Naive thymus-derived CD4-positive, alpha-beta T cell (primary cell): ENCODE measurements at regions of chr1 and their contacts with region 1.

Region 1: DNA sequence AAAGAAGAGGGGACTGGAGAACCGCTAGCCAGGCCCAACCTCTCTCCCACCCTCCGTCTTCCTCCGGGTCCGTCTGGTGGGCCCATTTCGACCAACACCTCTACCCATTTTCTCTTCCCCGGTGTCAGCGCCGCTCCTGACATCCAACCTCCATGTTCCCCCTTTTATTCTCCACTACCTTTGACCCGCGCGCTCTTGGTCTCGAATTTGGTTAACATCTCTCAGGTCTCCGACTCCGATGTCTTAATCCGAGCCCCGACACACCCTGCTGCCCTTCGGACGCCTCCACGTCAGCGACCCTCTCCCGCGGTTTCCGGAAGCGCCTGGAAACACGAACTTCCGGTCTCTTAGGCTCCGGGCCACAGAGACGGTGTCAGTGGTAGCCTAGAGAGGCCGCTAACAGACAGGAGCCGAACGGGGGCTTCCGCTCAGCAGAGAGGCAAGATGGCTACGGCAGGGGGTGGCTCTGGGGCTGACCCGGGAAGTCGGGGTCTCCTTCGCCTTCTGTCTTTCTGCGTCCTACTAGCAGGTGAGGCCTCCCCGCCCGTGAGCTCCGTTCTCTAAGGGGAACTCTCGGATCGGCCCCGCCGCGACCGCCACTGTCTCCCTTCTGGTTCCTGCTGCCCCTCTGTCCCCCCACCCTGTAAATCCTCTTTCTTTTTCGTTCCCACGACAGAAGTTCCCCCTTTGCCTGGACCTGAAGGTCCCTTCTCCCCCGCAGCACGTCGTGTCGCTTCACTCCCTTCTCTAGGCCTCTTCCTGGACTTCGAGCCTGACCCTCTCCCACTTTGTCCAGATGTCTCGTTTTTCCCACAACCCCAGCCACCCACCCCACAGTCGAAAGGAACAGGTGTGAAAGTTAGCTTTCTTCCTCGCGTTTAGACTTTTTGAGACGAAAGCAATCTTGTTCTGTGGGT is at the starts of genes COPA and NCSTN:
- DNase-seq: peak; percentile 67 to 93 (median 86)
- ATAC-seq: peak; percentile 98
- H3K4me3 ChIP-seq: peak within 1 kb of the TSS; percentile 87
- H3K4me3 Mint-ChIP-seq: peak within 1 kb of the TSS; percentile 99 to 100 (median 100)
- H3K27ac ChIP-seq: peak within 1 kb of the TSS; percentile 98
- H3K27ac Mint-ChIP-seq: peak within 1 kb of the TSS; percentile 98 to 100 (median 100)
- H3K4me1 ChIP-seq: peaks cover 23 to 29% of the 10 kb centered on the region in 2 donors
- H3K4me1 Mint-ChIP-seq: peaks cover 32 to 78% (median 66%) of the 10 kb centered on the region in 7 donors
- H3K27me3 ChIP-seq: no peaks in the 10 kb centered on the region
- H3K27me3 Mint-ChIP-seq: no peaks in the 10 kb centered on the region
- total RNA-seq, gene COPA: 104 to 151 (median 118) TPM
- total RNA-seq, gene NCSTN: 68.4 to 91.1 (median 73.5) TPM

Region 2: DNA sequence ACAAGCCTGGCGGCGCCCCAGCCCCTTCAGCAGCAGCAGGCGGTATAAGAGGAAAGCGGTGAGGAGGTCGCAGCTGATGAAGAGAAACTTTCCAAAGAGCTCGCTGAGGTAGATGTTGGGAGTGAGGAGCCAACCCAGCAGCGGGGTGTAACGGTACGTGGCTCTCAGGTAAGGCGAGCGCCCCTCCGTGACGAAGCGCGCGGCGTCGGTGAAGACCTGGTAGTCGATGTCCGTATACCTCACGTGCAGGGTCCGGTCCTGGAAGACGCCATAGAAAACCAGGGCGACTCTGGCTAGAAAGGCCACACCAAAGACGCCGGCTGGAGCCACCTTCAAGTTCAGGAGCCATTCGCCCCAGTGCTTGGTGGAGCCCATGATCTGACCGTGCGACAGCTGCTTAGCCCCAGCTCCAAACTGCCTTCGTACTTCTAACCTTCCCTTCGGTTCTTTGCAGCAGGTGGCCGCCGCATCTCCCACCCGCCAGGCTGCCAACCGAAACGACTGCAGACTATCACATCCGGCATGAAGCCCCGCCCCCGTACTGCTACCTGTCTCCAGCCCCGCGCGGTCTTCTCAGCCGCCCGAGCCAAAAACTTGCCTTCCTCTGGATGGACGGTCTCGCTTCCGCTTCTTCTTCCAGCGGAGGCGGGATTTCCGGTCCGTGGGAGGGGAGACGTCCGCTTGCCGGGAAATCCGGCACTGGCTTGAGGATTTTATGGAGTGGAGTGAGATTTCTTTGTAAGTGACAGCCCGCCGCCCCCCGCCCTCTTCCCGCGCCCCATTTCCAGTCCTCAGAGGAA is 311.6 kb before region 1 on chr1 and contains the start of gene PIGM:
- CTCF ChIA-PET with region 1: no interaction called
- POLR2A ChIA-PET with region 1: no interaction called
- intact Hi-C with region 1: loop called (anchors 1 to 5 kb)
- DNase-seq: peak; percentile 73 to 91 (median 90)
- ATAC-seq: peak; percentile 98
- H3K4me3 ChIP-seq: peak within 1 kb of the TSS; percentile 68
- H3K4me3 Mint-ChIP-seq: peak within 1 kb of the TSS; percentile 90 to 100 (median 98)
- H3K27ac ChIP-seq: peak within 1 kb of the TSS; percentile 69
- H3K27ac Mint-ChIP-seq: peak within 1 kb of the TSS; percentile 69 to 96 (median 89)
- H3K4me1 ChIP-seq: peaks cover 12 to 14% of the 10 kb centered on the region in 2 donors
- H3K4me1 Mint-ChIP-seq: peaks cover 30 to 56% (median 45%) of the 10 kb centered on the region in 7 donors
- H3K27me3 ChIP-seq: no peaks in the 10 kb centered on the region
- H3K27me3 Mint-ChIP-seq: peaks cover 0 to 18% (median 0%) of the 10 kb centered on the region in 5 donors
- total RNA-seq, gene PIGM: 4.0 to 11.4 (median 7.0) TPM

Region 3: DNA sequence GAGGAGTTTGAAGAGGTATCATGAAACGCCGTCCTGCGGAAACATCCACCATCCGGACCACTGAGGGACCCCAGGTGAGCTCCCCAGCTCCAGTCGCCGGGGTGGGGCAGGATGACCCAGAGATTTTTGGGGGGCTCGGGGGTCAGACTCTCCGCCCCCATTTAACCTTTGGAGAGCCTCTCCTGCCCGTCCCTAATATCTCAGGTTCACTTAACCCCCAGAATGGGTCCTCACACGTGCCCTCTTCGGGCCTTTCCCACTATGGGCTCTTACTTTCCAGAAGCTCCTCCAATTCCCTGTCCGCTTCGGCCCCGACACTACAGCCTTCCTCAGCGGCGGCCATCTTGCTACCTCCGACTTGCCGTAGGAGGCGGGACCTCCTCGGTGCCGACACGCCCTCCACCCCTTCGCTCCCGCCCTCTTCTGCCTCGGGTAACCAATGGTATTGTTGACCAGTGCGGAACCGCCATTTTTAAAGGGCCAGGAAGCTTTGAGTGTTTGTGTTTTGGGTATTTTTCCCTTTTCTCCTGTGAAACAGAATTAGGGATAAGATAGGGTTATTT is 58.3 kb before region 1 on chr1 and contains the start of gene PEX19:
- CTCF ChIA-PET with region 1: no interaction called
- POLR2A ChIA-PET with region 1: interaction called, 3 read pairs
- intact Hi-C with region 1: loop called (anchors 1 kb)
- DNase-seq: peak; percentile 85 to 95 (median 92)
- ATAC-seq: peak; percentile 100
- H3K4me3 ChIP-seq: peak within 1 kb of the TSS; percentile 95
- H3K4me3 Mint-ChIP-seq: peak within 1 kb of the TSS; percentile 95 to 100 (median 98)
- H3K27ac ChIP-seq: peak within 1 kb of the TSS; percentile 89
- H3K27ac Mint-ChIP-seq: peak within 1 kb of the TSS; percentile 93 to 99 (median 94)
- H3K4me1 ChIP-seq: peaks cover 11 to 16% of the 10 kb centered on the region in 2 donors
- H3K4me1 Mint-ChIP-seq: peaks cover 16 to 41% (median 31%) of the 10 kb centered on the region in 7 donors
- H3K27me3 ChIP-seq: no peaks in the 10 kb centered on the region
- H3K27me3 Mint-ChIP-seq: no peaks in the 10 kb centered on the region
- total RNA-seq, gene PEX19: 37.9 to 66.1 (median 49.2) TPM

Region 4: GRCh38 chr1:160291248-160292220 is 51.7 kb before region 1 on chr1:
- CTCF ChIA-PET with region 1: interaction called, 5 read pairs
- POLR2A ChIA-PET with region 1: interaction called, 4 read pairs
- intact Hi-C with region 1: loop called in 1 of 2 experiments (anchors 5 kb)
- DNase-seq: peak; percentile 24 to 82 (median 74)
- ATAC-seq: peak; percentile 98
- H3K4me3 ChIP-seq: no peak overlapping the region
- H3K4me3 Mint-ChIP-seq: no peak overlapping the region
- H3K27ac ChIP-seq: no peak overlapping the region
- H3K27ac Mint-ChIP-seq: peak overlapping the region; percentile 0 to 88 (median 40)
- H3K4me1 ChIP-seq: peaks cover 0 to 3% of the 10 kb centered on the region in 2 donors
- H3K4me1 Mint-ChIP-seq: peaks cover 2 to 7% (median 6%) of the 10 kb centered on the region in 7 donors
- H3K27me3 ChIP-seq: no peaks in the 10 kb centered on the region
- H3K27me3 Mint-ChIP-seq: no peaks in the 10 kb centered on the region

Region 5: GRCh38 chr1:160575112-160575664 is 232.0 kb after region 1 on chr1:
- CTCF ChIA-PET with region 1: no interaction called
- POLR2A ChIA-PET with region 1: no interaction called
- intact Hi-C with region 1: loop called in 1 of 2 experiments (anchors 1 kb)
- DNase-seq: peak in 1 of 9 donors; percentile 23
- ATAC-seq: peak; percentile 67
- H3K4me3 ChIP-seq: peak overlapping the region; percentile 66
- H3K4me3 Mint-ChIP-seq: peak overlapping the region; percentile 71 to 97 (median 86)
- H3K27ac ChIP-seq: peak overlapping the region; percentile 79
- H3K27ac Mint-ChIP-seq: peak overlapping the region; percentile 52 to 97 (median 94)
- H3K4me1 ChIP-seq: peaks cover 55 to 86% of the 10 kb centered on the region in 2 donors
- H3K4me1 Mint-ChIP-seq: peaks cover 69 to 100% (median 94%) of the 10 kb centered on the region in 7 donors
- H3K27me3 ChIP-seq: no peaks in the 10 kb centered on the region
- H3K27me3 Mint-ChIP-seq: no peaks in the 10 kb centered on the region

Region 6: GRCh38 chr1:161045750-161046571 is 702.8 kb after region 1 on chr1 and contains the start of gene USF1:
- CTCF ChIA-PET with region 1: no interaction called
- POLR2A ChIA-PET with region 1: no interaction called
- intact Hi-C with region 1: loop called in 1 of 2 experiments (anchors 5 kb)
- DNase-seq: peak; percentile 84 to 96 (median 93)
- ATAC-seq: peak; percentile 89
- H3K4me3 ChIP-seq: peak within 1 kb of the TSS; percentile 93
- H3K4me3 Mint-ChIP-seq: peak within 1 kb of the TSS; percentile 93 to 100 (median 97)
- H3K27ac ChIP-seq: peak within 1 kb of the TSS; percentile 92
- H3K27ac Mint-ChIP-seq: peak within 1 kb of the TSS; percentile 92 to 100 (median 99)
- H3K4me1 ChIP-seq: peaks cover 17 to 23% of the 10 kb centered on the region in 2 donors
- H3K4me1 Mint-ChIP-seq: peaks cover 41 to 54% (median 49%) of the 10 kb centered on the region in 7 donors
- H3K27me3 ChIP-seq: no peaks in the 10 kb centered on the region
- H3K27me3 Mint-ChIP-seq: no peaks in the 10 kb centered on the region
- total RNA-seq, gene USF1: 71.6 to 115 (median 91.7) TPM

Region 7: GRCh38 chr1:161117759-161118581 is 774.8 kb after region 1 on chr1 and contains the starts of genes NIT1 and PFDN2:
- CTCF ChIA-PET with region 1: no interaction called
- POLR2A ChIA-PET with region 1: no interaction called
- intact Hi-C with region 1: loop called in 1 of 2 experiments (anchors 2 kb)
- DNase-seq: peak; percentile 76 to 90 (median 85)
- ATAC-seq: peak; percentile 86
- H3K4me3 ChIP-seq: peak within 1 kb of the TSS; percentile 99
- H3K4me3 Mint-ChIP-seq: peak within 1 kb of the TSS; percentile 92 to 99 (median 95)
- H3K27ac ChIP-seq: peak within 1 kb of the TSS; percentile 92
- H3K27ac Mint-ChIP-seq: peak within 1 kb of the TSS; percentile 57 to 99 (median 93)
- H3K4me1 ChIP-seq: peaks cover 31 to 35% of the 10 kb centered on the region in 2 donors
- H3K4me1 Mint-ChIP-seq: peaks cover 44 to 82% (median 78%) of the 10 kb centered on the region in 7 donors
- H3K27me3 ChIP-seq: no peaks in the 10 kb centered on the region
- H3K27me3 Mint-ChIP-seq: no peaks in the 10 kb centered on the region
- total RNA-seq, gene NIT1: 23.3 to 49.6 (median 41.8) TPM
- total RNA-seq, gene PFDN2: 32.0 to 67.9 (median 34.0) TPM